CD4-positive, alpha-beta memory T cell (primary cell): ENCODE measurements at regions of chr6 and their contacts with region 1.

Region 1: DNA sequence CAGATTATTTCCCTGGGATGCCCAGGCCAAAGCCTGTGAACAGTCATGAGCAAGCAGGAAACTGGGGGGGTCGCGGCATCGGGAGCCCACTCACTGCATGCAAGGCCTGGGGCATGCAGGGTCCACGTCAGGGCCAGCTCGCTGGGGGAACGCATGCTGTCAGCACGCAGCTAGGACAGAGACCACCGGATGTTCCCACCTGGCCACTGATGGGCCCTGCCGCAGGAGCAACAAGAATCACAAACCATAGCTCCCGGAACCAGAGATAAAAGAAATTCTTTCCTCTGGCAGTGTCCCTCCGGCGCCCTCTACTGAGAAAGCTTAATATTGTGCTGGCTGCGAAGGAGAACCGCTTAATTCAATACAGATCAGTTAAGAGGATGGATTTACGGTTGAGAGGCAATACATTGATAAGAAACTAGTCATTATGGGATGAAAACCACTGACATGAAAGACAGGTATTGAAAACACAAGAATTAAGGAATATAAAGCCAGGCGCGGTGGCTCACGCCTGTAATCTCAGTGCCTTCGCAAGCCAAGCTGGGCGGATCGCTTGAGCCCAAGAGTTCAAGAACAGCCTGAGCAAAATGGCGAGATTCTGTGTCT is 32.6 kb downstream of the C6orf15 start:
- DNase-seq: peak; percentile 66 to 71 (median 68)
- H3K4me3 ChIP-seq: no peak overlapping the region
- H3K4me3 Mint-ChIP-seq: peak overlapping the region; percentile 41 to 77 (median 64)
- H3K27ac ChIP-seq: no peak overlapping the region
- H3K27ac Mint-ChIP-seq: peak overlapping the region in 2 of 7 donors; percentile 11 to 64
- H3K4me1 ChIP-seq: peaks cover 8% of the 10 kb centered on the region
- H3K4me1 Mint-ChIP-seq: peaks cover 2 to 8% (median 6%) of the 10 kb centered on the region in 4 donors
- H3K27me3 ChIP-seq: no peaks in the 10 kb centered on the region
- H3K27me3 Mint-ChIP-seq: peaks cover 3 to 4% of the 10 kb centered on the region in 2 donors

Region 2: GRCh38 chr6:30828027-30828960 is 251.5 kb before region 1 on chr6:
- CTCF ChIA-PET with region 1: interaction called, 29 read pairs
- POLR2A ChIA-PET with region 1: no interaction called
- intact Hi-C with region 1: no loop called
- DNase-seq: peak; percentile 71 to 77 (median 73)
- H3K4me3 ChIP-seq: peak overlapping the region; percentile 68 to 88
- H3K4me3 Mint-ChIP-seq: peak overlapping the region; percentile 91 to 98 (median 94)
- H3K27ac ChIP-seq: peak overlapping the region; percentile 70
- H3K27ac Mint-ChIP-seq: peak overlapping the region; percentile 72 to 99 (median 95)
- H3K4me1 ChIP-seq: peaks cover 78% of the 10 kb centered on the region
- H3K4me1 Mint-ChIP-seq: peaks cover 56 to 93% (median 72%) of the 10 kb centered on the region in 4 donors
- H3K27me3 ChIP-seq: no peaks in the 10 kb centered on the region
- H3K27me3 Mint-ChIP-seq: no peaks in the 10 kb centered on the region

Region 3: DNA sequence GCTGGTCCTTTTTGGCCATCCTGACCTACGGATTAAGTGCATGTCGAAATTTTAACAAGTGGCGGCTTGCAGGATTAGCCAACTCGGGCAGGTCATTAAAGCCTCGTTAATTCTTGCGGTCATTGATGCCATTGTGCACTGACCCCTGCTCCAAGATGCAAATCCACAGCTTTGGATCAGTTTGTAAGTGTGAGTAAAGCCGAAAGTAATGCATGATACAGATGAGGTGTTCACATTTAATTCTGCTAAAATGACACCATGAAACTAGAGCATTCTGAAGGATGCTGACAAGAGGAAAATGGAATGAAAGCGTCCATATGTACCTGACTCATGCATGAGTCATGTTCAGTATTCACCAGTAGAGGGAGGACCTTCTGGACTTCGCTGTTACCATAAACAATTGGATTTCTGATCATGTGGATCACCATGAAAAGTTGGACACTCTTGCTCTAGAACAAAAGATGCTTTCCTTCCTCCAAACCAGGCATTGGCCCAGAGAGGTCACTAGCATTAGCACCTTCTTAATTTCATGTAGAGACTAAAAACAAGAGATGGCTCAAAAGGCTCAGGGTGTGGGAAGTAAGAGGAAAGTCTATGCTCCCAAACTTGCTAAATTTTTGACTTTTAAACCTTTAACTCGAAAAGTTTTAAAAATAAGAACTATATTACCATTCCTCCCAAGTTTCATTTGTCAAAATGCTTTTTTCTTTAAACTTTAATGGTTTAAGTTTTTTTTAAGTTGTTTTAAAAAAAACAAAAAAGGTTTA is 21.4 kb before region 1 on chr6:
- CTCF ChIA-PET with region 1: interaction called, 13 read pairs
- POLR2A ChIA-PET with region 1: no interaction called
- intact Hi-C with region 1: no loop called
- DNase-seq: peak in 2 of 5 donors; percentile 5 to 11
- H3K4me3 ChIP-seq: no peak overlapping the region
- H3K4me3 Mint-ChIP-seq: no peak overlapping the region
- H3K27ac ChIP-seq: no peak overlapping the region
- H3K27ac Mint-ChIP-seq: no peak overlapping the region
- H3K4me1 ChIP-seq: no peaks in the 10 kb centered on the region
- H3K4me1 Mint-ChIP-seq: no peaks in the 10 kb centered on the region
- H3K27me3 ChIP-seq: no peaks in the 10 kb centered on the region
- H3K27me3 Mint-ChIP-seq: peaks cover 8 to 21% of the 10 kb centered on the region in 2 donors

Region 4: GRCh38 chr6:31094389-31094881 is 14.7 kb after region 1 on chr6:
- CTCF ChIA-PET with region 1: interaction called, 38 read pairs
- POLR2A ChIA-PET with region 1: interaction called, 21 read pairs
- intact Hi-C with region 1: no loop called
- DNase-seq: peak; percentile 43 to 66 (median 57)
- H3K4me3 ChIP-seq: peak overlapping the region in 1 of 2 donors; percentile 25
- H3K4me3 Mint-ChIP-seq: peak overlapping the region; percentile 58 to 91 (median 76)
- H3K27ac ChIP-seq: peak overlapping the region; percentile 40
- H3K27ac Mint-ChIP-seq: peak overlapping the region; percentile 82 to 93 (median 90)
- H3K4me1 ChIP-seq: peaks cover 61% of the 10 kb centered on the region
- H3K4me1 Mint-ChIP-seq: peaks cover 38 to 58% (median 52%) of the 10 kb centered on the region in 4 donors
- H3K27me3 ChIP-seq: no peaks in the 10 kb centered on the region
- H3K27me3 Mint-ChIP-seq: no peaks in the 10 kb centered on the region

Region 5: DNA sequence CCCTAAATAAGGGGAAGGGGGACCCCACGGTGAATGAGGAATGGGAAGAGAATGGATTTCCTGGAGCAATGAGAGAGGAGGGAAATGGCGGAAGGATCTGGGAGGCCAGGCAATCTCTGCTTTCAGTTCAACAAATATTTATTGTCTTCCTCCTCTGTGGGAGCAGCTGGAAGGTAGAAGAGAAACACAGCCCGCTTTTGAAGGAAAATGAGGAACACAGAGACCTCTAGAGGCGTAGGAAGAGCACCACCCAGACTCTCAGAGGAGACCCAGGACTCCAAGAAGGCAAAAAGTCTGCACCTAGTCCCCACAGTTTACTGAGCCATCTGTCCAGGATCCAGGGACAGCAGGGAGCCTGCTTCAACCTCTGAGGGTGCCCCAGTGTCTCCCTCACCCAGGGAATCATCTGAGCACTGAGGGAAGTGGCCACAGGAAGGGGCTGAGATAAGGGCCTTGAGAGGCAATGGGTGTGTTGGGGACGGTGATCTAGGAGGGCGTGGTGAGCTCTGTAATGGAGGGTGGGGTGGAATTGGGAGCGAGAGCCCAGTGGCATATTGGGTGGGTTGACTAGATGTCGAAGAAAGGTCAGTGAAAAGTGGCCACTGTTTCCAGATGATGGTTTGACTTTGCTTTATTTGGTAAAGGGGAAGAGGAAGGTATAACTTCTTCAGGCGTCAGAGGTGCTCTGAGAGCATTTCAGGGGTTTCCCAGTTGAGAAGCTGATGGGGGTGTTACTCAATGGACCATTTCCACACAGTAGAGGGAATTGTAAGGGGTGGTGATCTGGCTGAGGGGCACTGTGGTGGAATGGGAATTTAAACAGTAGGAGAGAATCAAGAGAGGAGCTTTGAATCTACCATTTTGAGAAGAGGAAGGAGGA is 35.5 kb after region 1 on chr6:
- CTCF ChIA-PET with region 1: interaction called, 62 read pairs
- POLR2A ChIA-PET with region 1: interaction called, 6 read pairs
- intact Hi-C with region 1: loop called (anchors 2 kb)
- DNase-seq: peak in 1 of 5 donors; percentile 40
- H3K4me3 ChIP-seq: no peak overlapping the region
- H3K4me3 Mint-ChIP-seq: peak overlapping the region in 2 of 8 donors; percentile 16 to 41
- H3K27ac ChIP-seq: no peak overlapping the region
- H3K27ac Mint-ChIP-seq: peak overlapping the region in 4 of 7 donors; percentile 12 to 80 (median 46)
- H3K4me1 ChIP-seq: peaks cover 5% of the 10 kb centered on the region
- H3K4me1 Mint-ChIP-seq: peaks cover 2 to 8% (median 5%) of the 10 kb centered on the region in 4 donors
- H3K27me3 ChIP-seq: no peaks in the 10 kb centered on the region
- H3K27me3 Mint-ChIP-seq: peaks cover 2 to 3% of the 10 kb centered on the region in 2 donors